ENCODE measurements at regions of chr19 and their contacts with region 1.

Region 1: DNA sequence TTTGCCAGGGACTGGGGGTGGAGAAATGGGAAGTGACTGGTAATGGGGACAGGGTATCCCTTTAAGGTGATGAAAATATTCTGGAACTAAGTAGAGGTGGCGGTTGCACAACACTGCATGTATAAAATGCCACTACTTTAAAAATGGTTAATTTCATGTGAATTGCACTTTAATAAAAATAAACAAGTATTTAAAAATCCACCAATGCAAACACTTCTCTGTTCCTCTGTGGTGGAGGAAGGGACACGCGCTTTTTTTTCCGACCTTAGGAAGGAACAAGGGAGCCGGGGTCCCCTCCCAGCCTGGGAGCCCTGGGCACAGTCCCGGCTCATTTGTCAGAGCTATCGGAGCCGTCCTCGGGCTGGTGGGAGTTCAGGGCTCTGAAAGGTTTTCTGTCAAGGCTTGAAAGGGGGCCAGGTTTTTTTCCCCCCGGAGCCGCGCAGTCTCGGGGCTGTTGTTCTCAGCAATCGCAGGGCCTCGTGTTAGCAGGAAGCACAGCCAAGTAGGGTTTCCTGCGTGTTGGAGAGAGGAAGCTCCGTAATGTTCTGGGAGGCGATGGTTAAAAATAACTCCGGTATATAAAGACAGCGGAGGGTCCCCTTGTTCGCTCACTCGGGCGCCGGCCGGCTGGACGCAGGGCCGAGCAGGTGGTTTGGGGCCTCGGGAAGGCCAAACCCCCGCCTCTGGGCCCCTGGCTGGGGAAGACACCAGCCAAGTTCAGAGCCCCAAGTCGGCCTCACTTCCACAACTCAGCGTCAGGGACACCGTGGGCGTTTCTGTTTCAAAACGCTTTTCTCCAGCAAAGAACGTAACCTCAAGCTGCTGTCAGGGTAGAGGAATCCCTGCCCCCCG is 41.2 kb upstream of the KLF2 start:
- DNase-seq: peak; percentile 87 to 92 (median 91)
- ATAC-seq: peak; percentile 89 to 93 (median 91)
- H3K4me3 ChIP-seq: peak overlapping the region in 9 of 12 donors; percentile 31 to 44 (median 34)
- H3K27ac ChIP-seq: peak overlapping the region; percentile 92 to 99 (median 97)
- H3K4me1 ChIP-seq: peaks cover 6 to 85% (median 46%) of the 10 kb centered on the region in 12 donors
- H3K27me3 ChIP-seq: no peaks in the 10 kb centered on the region
- CTCF ChIP-seq: no peak
- POLR2A ChIP-seq: peak; percentile 82 to 96

Region 2: DNA sequence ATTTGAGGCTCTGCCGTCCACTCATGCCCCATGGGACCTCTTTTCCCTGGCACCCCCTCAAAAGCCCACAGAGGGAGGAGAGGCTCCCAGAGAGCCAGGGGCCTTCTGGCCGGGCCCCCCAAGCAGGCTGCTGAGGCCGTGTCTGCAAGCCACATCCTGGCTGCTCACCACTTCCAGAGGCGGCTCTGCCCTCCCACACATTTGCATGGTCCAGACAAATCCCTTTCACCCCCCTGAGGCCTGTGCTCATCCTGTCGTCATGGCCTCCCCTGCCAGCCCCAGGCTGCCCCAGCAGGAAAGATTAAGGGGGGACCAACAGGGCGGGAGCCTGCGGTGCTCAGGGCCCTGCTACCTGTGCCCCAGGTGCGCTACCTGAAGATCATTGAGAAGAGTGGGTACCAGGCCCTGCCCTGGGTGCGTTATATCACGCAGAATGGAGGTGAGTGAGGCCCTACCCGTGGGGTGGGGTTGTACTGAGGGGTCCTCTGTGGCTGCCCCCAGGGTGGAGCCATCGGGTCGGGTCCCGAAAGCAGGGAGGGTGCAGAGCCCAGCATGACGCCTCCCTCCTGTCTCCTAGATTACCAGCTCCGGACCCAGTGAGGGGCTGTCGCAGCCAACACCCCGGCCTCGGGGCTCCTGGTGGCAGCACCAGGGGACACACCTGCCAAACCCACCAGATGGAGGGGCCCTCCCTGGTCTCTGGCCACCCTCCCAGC is 49.4 kb before region 1 on chr19:
- intact Hi-C with region 1: no loop called
- DNase-seq: no peak
- ATAC-seq: no peak
- H3K4me3 ChIP-seq: no peak overlapping the region
- H3K27ac ChIP-seq: no peak overlapping the region
- H3K4me1 ChIP-seq: peaks cover 0 to 23% (median 0%) of the 10 kb centered on the region in 12 donors
- H3K27me3 ChIP-seq: no peaks in the 10 kb centered on the region
- CTCF ChIP-seq: no peak
- POLR2A ChIP-seq: no peak

Region 3: GRCh38 chr19:16247353-16248182 is 35.9 kb before region 1 on chr19:
- intact Hi-C with region 1: loop called in 1 of 10 experiments (anchors 5 kb)
- DNase-seq: peak; percentile 84 to 94 (median 88)
- ATAC-seq: peak; percentile 95 to 99 (median 98)
- H3K4me3 ChIP-seq: no peak overlapping the region
- H3K27ac ChIP-seq: peak overlapping the region in 5 of 12 donors; percentile 16 to 57 (median 31)
- H3K4me1 ChIP-seq: peaks cover 0 to 13% (median 2%) of the 10 kb centered on the region in 12 donors
- H3K27me3 ChIP-seq: no peaks in the 10 kb centered on the region
- CTCF ChIP-seq: peak; percentile 91 to 98 (median 95)
- POLR2A ChIP-seq: no peak

Region 4: DNA sequence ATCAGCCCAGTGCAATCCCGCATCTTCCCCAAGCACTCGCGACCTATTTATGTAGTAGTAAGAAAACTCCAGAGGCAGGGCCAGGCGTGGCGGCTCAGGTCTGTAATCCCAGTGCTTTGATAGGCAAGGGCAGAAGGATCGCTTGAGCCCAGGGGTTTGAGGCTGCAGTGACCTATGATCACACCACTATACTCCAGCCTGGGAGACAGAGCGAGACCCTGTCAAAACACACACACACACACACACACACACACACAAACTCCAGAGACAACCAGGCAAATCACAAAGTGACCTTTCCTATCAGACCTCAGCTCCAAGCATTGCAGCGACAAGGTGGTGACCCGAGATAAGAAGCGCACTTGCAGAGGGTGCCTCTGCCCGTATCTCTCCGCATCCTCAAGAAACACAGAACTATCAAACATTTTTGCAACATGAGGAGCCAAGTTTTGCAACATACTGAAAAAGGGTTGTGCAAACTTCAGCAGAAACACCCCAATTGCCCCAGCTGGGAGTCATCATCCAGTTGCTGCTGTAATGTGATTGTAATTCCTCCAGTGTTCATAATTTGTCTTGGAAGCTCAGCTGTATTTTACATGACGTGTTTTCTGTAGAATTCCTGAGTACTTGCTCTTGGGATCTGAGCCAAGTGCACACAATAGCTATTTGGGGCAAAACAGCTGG is 32.5 kb after region 1 on chr19:
- intact Hi-C with region 1: loop called in 7 of 10 experiments (anchors 2 to 5 kb)
- DNase-seq: peak in 4 of 5 donors; percentile 68 to 75 (median 70)
- ATAC-seq: peak; percentile 54 to 76 (median 73)
- H3K4me3 ChIP-seq: peak overlapping the region in 1 of 12 donors; percentile 2
- H3K27ac ChIP-seq: peak overlapping the region; percentile 54 to 88 (median 77)
- H3K4me1 ChIP-seq: peaks cover 0 to 47% (median 27%) of the 10 kb centered on the region in 12 donors
- H3K27me3 ChIP-seq: no peaks in the 10 kb centered on the region
- CTCF ChIP-seq: no peak
- POLR2A ChIP-seq: no peak

Region 5: DNA sequence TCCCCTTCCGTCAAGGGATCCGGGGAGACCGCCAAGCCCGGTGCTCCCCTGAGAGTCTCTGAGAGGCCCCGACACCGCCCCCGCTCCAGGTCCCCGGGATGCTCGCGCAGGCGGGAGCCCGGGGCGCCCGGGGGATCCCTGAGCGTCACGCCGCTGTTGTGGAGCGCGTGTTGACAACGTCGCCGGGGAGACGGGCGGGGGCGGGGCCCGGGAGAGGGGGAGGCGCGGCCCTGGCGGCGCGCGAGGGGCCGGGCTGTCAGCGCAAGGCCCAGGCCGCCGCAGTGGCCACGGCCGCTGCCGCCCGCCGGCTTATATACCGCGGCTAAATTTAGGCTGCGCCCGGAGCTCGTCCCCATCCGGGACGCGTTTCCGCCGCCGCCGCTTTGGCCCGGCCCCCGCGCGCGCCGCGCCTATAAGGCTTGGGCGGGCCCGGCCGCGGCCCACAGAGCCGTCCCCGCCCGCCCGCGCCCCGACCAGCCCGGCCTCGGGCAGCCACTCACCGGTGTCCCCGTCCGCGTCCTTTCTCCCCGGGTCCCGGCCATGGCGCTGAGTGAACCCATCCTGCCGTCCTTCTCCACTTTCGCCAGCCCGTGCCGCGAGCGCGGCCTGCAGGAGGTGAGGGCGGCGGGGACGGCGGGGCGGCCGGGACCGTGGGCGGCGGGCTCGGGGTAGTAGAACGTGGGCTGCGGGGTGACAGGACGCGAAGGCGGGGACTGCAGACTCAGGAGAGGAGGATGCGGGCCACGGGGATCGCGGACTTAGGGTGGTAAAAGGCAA is 41.1 kb after region 1 on chr19 and contains the start of gene KLF2:
- intact Hi-C with region 1: loop called in 8 of 10 experiments (anchors 1 to 5 kb)
- DNase-seq: peak; percentile 96 to 97 (median 97)
- ATAC-seq: peak; percentile 71 to 92 (median 82)
- H3K4me3 ChIP-seq: peak within 1 kb of the TSS; percentile 64 to 99 (median 83)
- H3K27ac ChIP-seq: peak within 1 kb of the TSS; percentile 92 to 99 (median 98)
- H3K4me1 ChIP-seq: peaks cover 0 to 44% (median 25%) of the 10 kb centered on the region in 12 donors
- H3K27me3 ChIP-seq: no peaks in the 10 kb centered on the region
- CTCF ChIP-seq: no peak
- POLR2A ChIP-seq: peak; percentile 85 to 98
- total RNA-seq, gene KLF2: 28.0 to 87.2 (median 45.0) TPM